MCF 10A (cell line): ENCODE measurements at regions of chr2 and their contacts with region 1.

Region 1: DNA sequence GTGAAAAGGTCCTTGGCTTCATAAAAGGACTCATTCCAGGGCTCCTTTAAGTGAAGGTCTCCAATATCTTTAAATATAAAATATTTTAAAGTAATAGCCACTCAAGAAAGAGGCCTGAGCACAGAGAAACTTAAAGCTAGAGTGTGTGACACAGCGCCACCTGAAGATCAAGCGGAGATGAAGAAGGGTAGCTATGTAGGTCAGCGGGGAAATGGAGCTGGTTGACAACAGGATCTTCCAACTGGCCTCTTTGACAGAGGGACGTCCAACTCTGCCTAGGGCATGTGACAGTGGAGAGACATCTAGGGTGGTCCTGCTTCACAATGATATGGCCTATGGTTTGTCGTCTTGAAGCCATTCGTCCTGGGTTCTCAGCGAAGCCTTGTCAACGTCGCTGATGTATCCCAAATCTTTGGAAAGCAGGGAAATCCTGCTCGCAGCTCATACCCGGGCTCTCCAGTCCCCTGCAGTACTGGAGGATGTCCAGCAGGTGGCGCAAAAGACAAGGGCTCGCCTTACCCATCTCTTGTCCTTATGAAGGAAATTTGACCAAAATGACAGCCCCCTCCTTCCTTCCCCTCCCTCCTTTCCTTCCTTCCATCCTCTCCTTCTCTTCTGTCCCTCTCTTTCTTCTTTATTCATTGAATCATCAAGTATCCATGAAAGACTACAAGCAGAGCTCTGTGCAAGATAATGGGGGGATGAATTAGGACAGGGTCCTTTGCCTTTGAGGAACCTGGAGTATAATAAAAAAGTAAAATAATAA is 59.6 kb downstream of the LONRF2 start:
- DNase-seq: peak; percentile 69
- H3K4me3 Mint-ChIP-seq: no peak overlapping the region
- H3K27ac Mint-ChIP-seq: no peak overlapping the region
- H3K4me1 Mint-ChIP-seq: peaks cover 5% of the 10 kb centered on the region
- H3K27me3 Mint-ChIP-seq: no peaks in the 10 kb centered on the region
- CTCF ChIP-seq: peak; percentile 91

Region 2: GRCh38 chr2:99559075-99559662 is 703.6 kb before region 1 on chr2:
- CTCF ChIA-PET with region 1: interaction called, 82 read pairs
- POLR2A ChIA-PET with region 1: no interaction called
- intact Hi-C with region 1: loop called (anchors 1 kb)
- DNase-seq: peak; percentile 76
- H3K4me3 Mint-ChIP-seq: no peak overlapping the region
- H3K27ac Mint-ChIP-seq: no peak overlapping the region
- H3K4me1 Mint-ChIP-seq: no peaks in the 10 kb centered on the region
- H3K27me3 Mint-ChIP-seq: peaks cover 26% of the 10 kb centered on the region
- CTCF ChIP-seq: peak; percentile 96

Region 3: GRCh38 chr2:99818842-99819241 is 443.9 kb before region 1 on chr2:
- CTCF ChIA-PET with region 1: interaction called, 52 read pairs
- POLR2A ChIA-PET with region 1: no interaction called
- intact Hi-C with region 1: loop called (anchors 1 kb)
- DNase-seq: peak; percentile 46
- H3K4me3 Mint-ChIP-seq: no peak overlapping the region
- H3K27ac Mint-ChIP-seq: no peak overlapping the region
- H3K4me1 Mint-ChIP-seq: peaks cover 4% of the 10 kb centered on the region
- H3K27me3 Mint-ChIP-seq: peaks cover 9% of the 10 kb centered on the region
- CTCF ChIP-seq: peak; percentile 55

Region 4: DNA sequence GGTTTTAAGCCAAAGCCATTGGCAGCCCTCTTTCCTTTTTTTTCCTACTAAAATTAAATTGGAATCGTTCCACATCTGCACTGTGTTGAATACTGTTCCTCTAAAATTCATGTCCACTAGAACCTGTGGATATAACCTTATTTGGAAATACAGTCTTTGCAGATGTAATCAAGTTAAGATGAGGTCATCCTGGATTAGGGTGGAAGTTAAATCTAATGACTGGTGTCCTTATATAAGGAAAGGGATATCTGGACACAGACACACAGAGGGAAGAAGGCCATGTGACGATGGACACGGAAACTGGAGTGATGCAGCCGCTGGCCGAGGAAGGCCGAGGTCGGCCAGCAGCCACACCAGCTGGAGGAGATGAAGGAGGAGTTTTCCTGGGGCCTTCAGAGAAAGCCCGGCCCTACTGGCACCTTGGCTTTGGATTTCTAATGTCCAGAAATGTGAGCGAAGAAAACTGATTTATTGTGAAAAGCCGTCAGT is 10.1 kb after region 1 on chr2:
- CTCF ChIA-PET with region 1: interaction called, 77 read pairs
- POLR2A ChIA-PET with region 1: no interaction called
- intact Hi-C with region 1: no loop called
- DNase-seq: no peak
- H3K4me3 Mint-ChIP-seq: no peak overlapping the region
- H3K27ac Mint-ChIP-seq: no peak overlapping the region
- H3K4me1 Mint-ChIP-seq: no peaks in the 10 kb centered on the region
- H3K27me3 Mint-ChIP-seq: no peaks in the 10 kb centered on the region
- CTCF ChIP-seq: no peak

Region 5: DNA sequence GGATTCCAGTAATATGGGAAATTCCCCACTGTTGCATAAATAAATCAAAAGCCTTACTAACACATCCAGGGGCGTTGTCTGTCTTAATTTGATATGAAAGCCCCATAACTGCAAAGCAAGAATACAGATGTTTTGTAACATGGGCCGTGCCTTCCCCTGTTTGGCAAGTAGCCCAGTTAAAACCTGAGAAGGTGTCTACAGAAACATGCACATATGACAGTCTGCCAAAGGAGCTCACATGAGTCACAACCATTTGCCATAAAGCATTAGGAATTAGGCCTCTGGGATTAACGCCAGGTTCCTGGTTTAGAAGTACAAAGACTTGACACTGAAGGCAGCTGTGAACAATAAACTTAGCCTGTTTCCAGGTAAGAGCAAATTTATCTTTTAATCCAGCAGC is 102.7 kb after region 1 on chr2:
- CTCF ChIA-PET with region 1: interaction called, 50 read pairs
- POLR2A ChIA-PET with region 1: interaction called, 5 read pairs
- intact Hi-C with region 1: no loop called
- DNase-seq: peak; percentile 100
- H3K4me3 Mint-ChIP-seq: no peak overlapping the region
- H3K27ac Mint-ChIP-seq: peak overlapping the region; percentile 39
- H3K4me1 Mint-ChIP-seq: peaks cover 15% of the 10 kb centered on the region
- H3K27me3 Mint-ChIP-seq: no peaks in the 10 kb centered on the region
- CTCF ChIP-seq: no peak

Region 6: GRCh38 chr2:100407108-100407507 is 144.4 kb after region 1 on chr2:
- CTCF ChIA-PET with region 1: interaction called, 14 read pairs
- POLR2A ChIA-PET with region 1: no interaction called
- intact Hi-C with region 1: no loop called
- DNase-seq: no peak
- H3K4me3 Mint-ChIP-seq: no peak overlapping the region
- H3K27ac Mint-ChIP-seq: no peak overlapping the region
- H3K4me1 Mint-ChIP-seq: no peaks in the 10 kb centered on the region
- H3K27me3 Mint-ChIP-seq: no peaks in the 10 kb centered on the region
- CTCF ChIP-seq: no peak

Region 7: GRCh38 chr2:100513650-100514049 is 250.9 kb after region 1 on chr2:
- CTCF ChIA-PET with region 1: no interaction called
- POLR2A ChIA-PET with region 1: no interaction called
- intact Hi-C with region 1: no loop called
- DNase-seq: no peak
- H3K4me3 Mint-ChIP-seq: no peak overlapping the region
- H3K27ac Mint-ChIP-seq: no peak overlapping the region
- H3K4me1 Mint-ChIP-seq: no peaks in the 10 kb centered on the region
- H3K27me3 Mint-ChIP-seq: no peaks in the 10 kb centered on the region
- CTCF ChIP-seq: no peak